ENCODE measurements at regions of chr3 and their contacts with region 1.

Region 1: GRCh38 chr3:70090322-70090913 is 90.9 kb downstream of the SAMMSON start:
- DNase-seq: peak; percentile 20
- CTCF ChIP-seq: peak; percentile 53

Region 2: DNA sequence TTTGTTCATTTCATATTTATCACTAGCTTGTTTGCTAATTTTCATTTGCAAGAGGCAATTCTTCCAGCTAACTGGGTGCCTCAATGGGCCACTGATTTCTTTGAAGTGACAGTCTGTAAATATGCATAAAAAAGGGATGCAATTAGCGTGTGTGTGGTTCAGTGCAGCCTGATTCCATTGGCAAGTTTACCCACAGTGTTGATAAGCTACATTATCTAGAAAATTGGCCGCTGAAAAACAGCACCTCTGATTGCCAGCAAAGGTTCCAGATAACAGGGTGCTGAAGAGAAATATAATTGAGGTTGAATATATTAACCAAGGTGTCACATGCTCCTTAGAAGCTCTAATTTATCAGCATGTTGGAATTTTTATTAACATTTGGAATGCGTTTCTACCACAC is 14.0 kb before region 1 on chr3:
- CTCF ChIA-PET with region 1: interaction called, 10 read pairs
- POLR2A ChIA-PET with region 1: interaction called, 4 read pairs
- DNase-seq: no peak
- CTCF ChIP-seq: no peak

Region 3: GRCh38 chr3:70108072-70108471 is 17.7 kb after region 1 on chr3:
- CTCF ChIA-PET with region 1: interaction called, 131 read pairs
- POLR2A ChIA-PET with region 1: no interaction called
- DNase-seq: peak; percentile 22
- CTCF ChIP-seq: peak; percentile 39

Measured in GM10248 (cell line).